A673 (cell line): ENCODE measurements at regions of chr17 and their contacts with region 1.

Region 1: GRCh38 chr17:44110823-44111633 is 12.4 kb downstream of the HDAC5 start:
- DNase-seq: peak; percentile 91
- H3K4me3 ChIP-seq: peak overlapping the region; percentile 33
- H3K27ac ChIP-seq: peak overlapping the region; percentile 59
- H3K4me1 ChIP-seq: peaks cover 38% of the 10 kb centered on the region
- H3K27me3 ChIP-seq: no peaks in the 10 kb centered on the region
- CTCF ChIP-seq: no peak

Region 2: DNA sequence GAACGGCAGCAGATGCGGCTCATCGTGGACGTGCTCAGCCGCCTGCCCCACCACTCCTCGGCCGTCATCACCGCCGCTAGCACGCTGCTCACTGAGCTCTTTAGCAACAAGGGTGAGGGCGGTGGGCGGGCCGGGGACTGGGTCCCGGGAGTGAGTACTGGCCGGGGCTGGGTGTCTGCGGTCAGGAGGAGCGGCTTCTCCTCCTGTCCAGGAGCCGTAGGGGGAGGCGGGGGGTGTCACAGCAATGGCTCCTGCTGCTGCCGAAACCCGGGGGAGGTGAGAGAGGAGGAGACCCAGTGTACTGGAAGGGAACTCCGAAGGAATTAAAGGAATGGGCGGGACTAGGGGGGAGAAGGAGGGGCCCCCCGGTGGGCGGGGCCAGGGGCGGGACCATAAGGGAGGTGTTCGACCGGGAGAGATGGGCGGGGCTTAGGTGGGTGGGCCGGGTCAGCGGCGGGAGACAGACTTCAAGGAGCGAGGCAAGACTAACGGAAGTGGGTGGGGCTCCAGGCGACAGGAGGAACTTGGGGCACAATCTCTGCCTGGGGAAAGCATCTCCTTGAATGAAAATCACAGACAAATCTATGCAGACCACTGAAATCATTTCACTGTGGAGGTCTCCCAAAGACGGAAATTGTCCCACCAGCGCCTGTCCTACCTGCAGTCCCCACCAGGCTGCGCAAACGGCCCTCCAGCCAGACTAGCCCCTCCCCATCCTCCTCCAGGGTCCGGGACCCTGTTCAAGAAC is 104.3 kb before region 1 on chr17:
- CTCF ChIA-PET with region 1: no interaction called
- POLR2A ChIA-PET with region 1: no interaction called
- intact Hi-C with region 1: loop called (anchors 10 kb)
- DNase-seq: peak; percentile 95
- H3K4me3 ChIP-seq: peak overlapping the region; percentile 60
- H3K27ac ChIP-seq: peak overlapping the region; percentile 57
- H3K4me1 ChIP-seq: no peaks in the 10 kb centered on the region
- H3K27me3 ChIP-seq: peaks cover 9% of the 10 kb centered on the region
- CTCF ChIP-seq: peak; percentile 36

Region 3: DNA sequence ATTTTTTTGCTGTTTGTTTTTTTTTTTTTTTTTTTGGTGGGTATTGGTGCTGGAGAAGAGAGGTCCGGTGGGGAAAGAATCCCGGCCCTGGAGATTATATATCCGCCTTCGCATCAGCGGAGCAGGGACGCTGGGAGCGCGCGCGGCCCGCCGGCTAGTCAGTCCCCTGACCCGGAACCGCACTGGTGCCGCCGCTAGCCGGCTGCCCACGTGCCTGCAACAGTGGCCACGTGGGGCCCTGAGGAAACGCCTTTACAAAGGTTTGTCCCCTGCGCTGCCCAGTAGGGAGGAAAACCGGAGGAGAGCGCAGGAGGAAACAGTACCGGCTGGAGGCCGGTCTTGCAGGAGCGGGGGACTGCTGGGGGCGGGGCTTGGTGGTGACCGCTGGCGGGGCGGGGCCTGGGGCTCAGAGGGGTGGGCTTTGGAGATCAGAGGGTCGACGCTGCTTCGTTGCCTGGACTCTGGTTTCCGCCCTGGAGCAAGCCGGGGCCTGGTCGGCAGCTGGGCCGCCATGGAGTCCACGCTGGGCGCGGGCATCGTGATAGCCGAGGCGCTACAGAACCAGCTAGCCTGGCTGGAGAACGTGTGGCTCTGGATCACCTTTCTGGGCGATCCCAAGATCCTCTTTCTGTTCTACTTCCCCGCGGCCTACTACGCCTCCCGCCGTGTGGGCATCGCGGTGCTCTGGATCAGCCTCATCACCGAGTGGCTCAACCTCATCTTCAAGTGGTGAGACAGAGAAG is 40.4 kb before region 1 on chr17 and contains the start of gene G6PC3:
- CTCF ChIA-PET with region 1: no interaction called
- POLR2A ChIA-PET with region 1: no interaction called
- intact Hi-C with region 1: loop called (anchors 1 kb)
- DNase-seq: peak; percentile 93
- H3K4me3 ChIP-seq: peak within 1 kb of the TSS; percentile 59
- H3K27ac ChIP-seq: peak within 1 kb of the TSS; percentile 65
- H3K4me1 ChIP-seq: peaks cover 3% of the 10 kb centered on the region
- H3K27me3 ChIP-seq: no peaks in the 10 kb centered on the region
- CTCF ChIP-seq: no peak
- total RNA-seq, gene G6PC3: 47.0 and 57.9 TPM in 2 replicates

Region 4: DNA sequence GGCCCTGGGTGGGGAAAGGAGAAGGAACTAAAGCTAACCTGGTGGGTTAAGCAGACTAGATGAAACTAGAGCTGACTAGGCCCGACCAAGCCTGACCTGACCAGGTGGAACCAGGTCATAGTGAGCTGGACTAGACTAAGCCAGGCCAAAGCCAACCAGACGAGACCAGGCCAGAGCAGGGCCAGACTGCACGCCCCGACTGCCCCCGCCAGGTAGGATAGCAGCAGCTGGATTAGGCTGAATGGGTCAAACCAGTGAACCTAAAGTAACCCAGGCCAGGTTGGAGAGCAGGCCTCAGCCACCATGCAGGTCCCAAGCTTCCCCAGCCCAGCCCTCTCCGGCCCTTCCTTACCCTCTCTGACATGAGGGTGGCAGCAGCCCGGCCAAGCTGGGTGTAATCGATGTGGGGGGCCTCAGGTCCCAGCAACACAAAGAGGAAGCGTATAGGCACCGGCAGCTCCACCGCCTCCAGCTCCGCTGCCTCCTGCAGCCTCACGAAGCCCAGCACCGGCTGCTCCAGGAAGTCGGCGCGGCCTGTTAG is 147.9 kb after region 1 on chr17:
- CTCF ChIA-PET with region 1: no interaction called
- POLR2A ChIA-PET with region 1: no interaction called
- intact Hi-C with region 1: no loop called
- DNase-seq: no peak
- H3K4me3 ChIP-seq: no peak overlapping the region
- H3K27ac ChIP-seq: no peak overlapping the region
- H3K4me1 ChIP-seq: no peaks in the 10 kb centered on the region
- H3K27me3 ChIP-seq: no peaks in the 10 kb centered on the region
- CTCF ChIP-seq: no peak